ENCODE measurements at regions of chr4 and their contacts with region 1.

Region 1: DNA sequence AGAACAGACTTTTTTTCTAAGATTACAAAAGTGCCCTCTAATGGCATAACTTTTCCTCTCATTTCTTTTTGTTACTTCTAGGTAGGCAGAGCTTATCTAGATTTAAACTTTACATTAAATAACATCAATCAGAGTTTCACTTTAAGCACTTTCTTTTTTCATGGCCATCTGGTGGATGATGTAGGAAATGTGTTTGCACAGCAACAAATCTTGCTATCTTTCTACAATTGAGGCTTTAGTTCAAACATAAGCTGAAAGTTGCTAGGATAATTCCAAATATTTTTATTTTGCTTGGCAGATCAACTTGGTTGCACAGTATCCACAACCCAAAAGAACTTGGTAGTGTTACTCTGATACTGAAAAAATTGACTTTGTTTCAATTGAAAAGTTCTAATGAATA is 22.0 kb downstream of the NDNF start:
- DNase-seq: peak; percentile 20
- ATAC-seq: peak; percentile 42
- H3K4me3 ChIP-seq: no peak overlapping the region
- H3K27ac ChIP-seq: no peak overlapping the region
- H3K4me1 ChIP-seq: peaks cover 9% of the 10 kb centered on the region; the same call in 1 of the 2 replicates
- H3K27me3 ChIP-seq: no peaks in the 10 kb centered on the region
- CTCF ChIP-seq: peak; percentile 47

Region 2: DNA sequence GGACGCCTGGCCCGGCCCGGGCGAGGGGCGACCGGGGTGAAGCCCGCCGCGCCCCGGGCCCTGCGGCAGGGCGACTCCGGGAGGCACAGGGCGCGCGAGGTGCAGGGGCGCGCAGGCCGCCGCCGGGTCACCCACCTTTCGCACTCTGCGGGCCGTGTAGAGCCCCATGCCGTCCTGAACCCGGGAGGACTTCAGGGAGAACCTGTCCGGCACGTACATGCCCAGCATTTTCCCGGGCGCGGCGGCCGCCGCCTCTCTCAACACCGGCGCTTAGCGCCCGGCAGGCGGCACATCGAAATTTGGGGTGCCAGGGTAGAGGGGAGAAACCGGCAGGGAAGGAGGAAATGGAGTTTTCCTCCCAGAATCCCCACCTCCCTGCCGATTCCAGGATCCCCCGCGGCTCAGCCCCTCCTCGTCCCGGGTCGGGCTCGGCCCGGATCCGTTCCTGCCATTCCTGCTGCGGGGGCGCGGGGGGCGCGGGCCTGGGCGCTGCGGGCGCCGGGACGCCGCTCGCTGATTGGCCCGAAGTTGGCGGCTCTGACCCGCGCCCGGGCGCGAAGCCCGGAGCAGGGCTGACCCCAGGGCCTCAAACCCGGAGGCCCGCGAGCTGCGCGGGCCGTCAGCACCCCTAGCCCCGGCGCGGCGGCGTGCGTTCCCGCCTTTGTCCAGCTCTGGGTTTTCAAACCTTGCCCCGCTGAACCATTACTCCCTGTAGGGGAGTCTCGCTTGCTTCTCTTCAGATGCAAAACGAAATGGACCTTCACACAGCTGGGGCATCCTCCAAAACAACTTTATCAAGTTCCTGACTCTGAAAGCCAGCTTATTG is 127.7 kb before region 1 on chr4 and contains the start of gene PRDM5:
- CTCF ChIA-PET with region 1: no interaction called
- POLR2A ChIA-PET with region 1: no interaction called
- intact Hi-C with region 1: loop called (anchors 5 kb)
- DNase-seq: peak; percentile 21
- ATAC-seq: peak; percentile 57
- H3K4me3 ChIP-seq: peak within 1 kb of the TSS; percentile 89
- H3K27ac ChIP-seq: peak within 1 kb of the TSS; percentile 39
- H3K4me1 ChIP-seq: peaks cover 21% of the 10 kb centered on the region
- H3K27me3 ChIP-seq: no peaks in the 10 kb centered on the region
- CTCF ChIP-seq: no peak
- total RNA-seq, gene PRDM5: 2.4 and 3.9 TPM in 2 replicates

Region 3: DNA sequence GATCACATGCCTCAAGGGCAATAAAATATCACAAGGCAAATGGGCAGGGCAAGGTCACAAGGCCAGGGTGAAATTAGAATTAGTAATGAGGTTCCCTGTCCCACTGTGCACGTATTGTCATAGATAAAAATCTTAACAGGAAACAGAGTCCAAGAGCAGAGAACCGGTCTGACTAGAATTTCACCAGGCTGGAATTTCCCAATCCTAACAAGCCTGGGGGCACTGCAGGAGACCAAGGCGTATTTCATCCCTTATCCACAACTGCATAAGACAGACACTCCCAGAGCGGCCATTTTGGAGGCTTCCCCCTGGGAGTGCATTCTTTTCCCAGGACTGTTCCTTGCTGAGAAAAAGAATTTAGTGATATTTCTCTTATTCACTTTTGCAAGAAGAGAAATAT is 101.9 kb before region 1 on chr4:
- CTCF ChIA-PET with region 1: no interaction called
- POLR2A ChIA-PET with region 1: no interaction called
- intact Hi-C with region 1: no loop called
- DNase-seq: peak; percentile 41
- ATAC-seq: no peak
- H3K4me3 ChIP-seq: no peak overlapping the region
- H3K27ac ChIP-seq: no peak overlapping the region
- H3K4me1 ChIP-seq: no peaks in the 10 kb centered on the region
- H3K27me3 ChIP-seq: no peaks in the 10 kb centered on the region
- CTCF ChIP-seq: no peak